Mucosa of descending colon (tissue), 3 donors: ENCODE measurements at regions of chr7 and their contacts with region 1.

Region 1: DNA sequence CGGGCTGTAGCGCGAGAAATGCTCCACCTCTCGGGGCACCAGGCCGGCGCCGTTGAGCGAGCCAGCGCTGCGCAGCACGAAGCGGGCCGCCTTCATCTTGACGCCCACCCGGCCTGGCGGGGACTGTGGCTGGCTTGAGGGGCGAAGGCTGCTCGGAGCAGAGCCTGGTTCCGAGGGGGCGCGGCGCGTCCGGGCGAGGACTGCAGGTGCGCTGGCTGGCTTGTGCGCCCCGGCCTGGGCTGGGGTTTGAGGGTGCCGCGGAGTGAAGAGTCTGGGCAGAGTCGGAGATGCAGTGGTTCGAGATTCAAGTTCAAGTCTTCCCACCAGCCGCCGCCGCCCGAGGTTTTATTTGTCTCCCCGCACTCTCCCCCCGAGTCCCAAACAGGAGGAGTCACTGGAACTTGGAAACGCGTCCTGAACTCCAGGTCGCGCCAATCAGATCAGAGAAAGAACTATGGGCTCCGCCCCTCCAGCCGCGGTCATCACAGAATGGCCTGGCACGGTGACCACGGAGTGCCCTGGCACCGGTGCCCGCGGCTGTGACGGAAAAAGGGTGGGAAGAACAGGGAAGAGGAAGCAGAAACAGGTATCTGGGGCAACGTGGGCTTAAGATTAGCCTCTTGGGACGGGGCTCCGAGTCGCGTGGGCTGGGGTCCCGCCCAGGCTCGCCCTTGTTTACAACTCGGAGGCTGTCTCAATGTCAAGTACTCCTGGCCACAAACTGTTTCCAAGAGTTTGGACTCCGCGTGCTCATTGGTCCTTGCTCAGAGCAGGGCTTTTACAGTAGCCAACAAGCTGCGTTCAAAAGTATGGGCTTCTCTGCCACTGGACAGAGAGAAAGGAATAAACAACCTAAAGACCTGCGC is at the start of gene PDK4:
- DNase-seq: peak; percentile 91 to 95 (median 92)
- ATAC-seq: peak; percentile 96
- H3K4me3 ChIP-seq: peak within 1 kb of the TSS; percentile 79
- H3K4me1 ChIP-seq: peaks cover 5% of the 10 kb centered on the region
- CTCF ChIP-seq: no peak
- total RNA-seq, gene PDK4: 36.2 to 224 (median 50.6) TPM

Region 2: GRCh38 chr7:95545078-95545498 is 51.3 kb before region 1 on chr7:
- intact Hi-C with region 1: loop called in 1 of 2 experiments (anchors 5 kb)
- DNase-seq: peak in 1 of 3 donors; percentile 79
- ATAC-seq: peak; percentile 93
- H3K4me3 ChIP-seq: no peak overlapping the region
- H3K4me1 ChIP-seq: peaks cover 10% of the 10 kb centered on the region
- CTCF ChIP-seq: peak; percentile 26